ENCODE measurements at regions of chr1 and their contacts with region 1.

Region 1: DNA sequence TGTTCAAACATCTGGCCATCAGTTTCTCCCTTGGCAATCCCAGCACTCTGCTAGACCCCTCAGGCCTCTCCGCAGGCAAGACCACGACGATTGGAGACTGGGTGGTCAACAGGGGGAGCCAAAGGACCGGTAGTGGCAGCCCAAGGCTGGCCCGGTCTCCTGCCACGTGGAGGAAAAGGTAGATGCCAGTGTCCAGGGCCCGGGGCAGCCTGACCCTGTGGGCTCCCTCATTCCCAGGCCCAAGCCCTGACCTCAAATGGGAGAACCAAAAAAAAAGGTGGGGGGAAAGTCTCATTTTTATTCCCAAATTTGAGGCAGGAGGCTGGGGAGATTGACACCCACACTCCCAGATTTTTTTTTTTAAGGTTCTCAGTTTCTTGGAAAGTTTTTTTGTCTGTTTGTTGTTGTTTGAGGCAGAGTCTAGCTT is 24.8 kb downstream of the S100A6 start:
- DNase-seq: peak; percentile 87
- H3K4me3 Mint-ChIP-seq: no peak overlapping the region
- H3K27ac Mint-ChIP-seq: peak overlapping the region; percentile 45
- H3K4me1 Mint-ChIP-seq: peaks cover 10% of the 10 kb centered on the region
- H3K27me3 Mint-ChIP-seq: no peaks in the 10 kb centered on the region

Region 2: DNA sequence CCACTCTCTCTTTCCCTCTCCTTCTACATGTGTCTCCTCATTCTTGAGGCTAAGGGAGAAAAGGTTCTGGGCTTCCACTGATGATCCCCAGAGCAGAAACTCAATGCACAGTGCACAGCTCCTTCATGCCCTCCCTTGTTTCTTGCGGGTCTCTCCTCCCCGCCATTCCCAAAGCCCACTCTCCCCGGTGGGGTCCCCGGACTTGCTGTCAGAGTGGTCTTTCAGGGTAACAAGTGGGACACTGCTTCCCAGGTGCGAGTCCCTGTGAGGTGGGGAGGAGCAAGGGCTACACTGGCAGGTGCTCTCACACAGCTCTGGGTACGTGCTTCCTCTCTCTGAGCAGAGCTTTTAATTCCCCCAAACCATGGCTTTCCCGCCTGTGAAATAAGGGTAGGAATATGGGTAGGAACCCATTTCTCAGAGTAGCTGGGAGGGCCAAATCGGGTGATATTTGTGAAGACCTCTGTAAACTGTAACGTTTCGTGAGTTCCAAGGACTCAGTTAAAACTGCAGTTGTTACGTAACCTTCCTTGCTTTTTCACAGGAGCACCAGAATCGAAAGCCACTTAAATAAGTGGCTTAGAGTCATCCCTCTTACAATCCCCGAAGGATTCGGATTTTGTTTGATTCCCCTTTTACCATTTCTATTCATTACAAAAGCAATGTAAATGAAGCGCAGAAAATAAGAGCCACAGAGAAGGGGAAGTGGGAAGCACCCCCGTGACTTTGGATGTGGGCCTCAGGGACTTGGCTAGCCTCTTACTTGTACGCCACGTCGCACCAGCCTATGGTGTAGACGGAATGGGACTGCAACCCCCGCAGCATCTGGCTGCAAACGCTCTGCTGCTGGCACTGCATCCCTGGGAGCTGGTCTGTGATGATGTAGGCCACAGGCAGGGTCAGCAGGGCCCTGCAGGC is 204.4 kb before region 1 on chr1:
- CTCF ChIA-PET with region 1: no interaction called
- POLR2A ChIA-PET with region 1: no interaction called
- intact Hi-C with region 1: no loop called
- DNase-seq: no peak
- H3K4me3 Mint-ChIP-seq: no peak overlapping the region
- H3K27ac Mint-ChIP-seq: no peak overlapping the region
- H3K4me1 Mint-ChIP-seq: no peaks in the 10 kb centered on the region
- H3K27me3 Mint-ChIP-seq: peaks cover 1% of the 10 kb centered on the region

Region 3: GRCh38 chr1:153337980-153338853 is 172.8 kb before region 1 on chr1:
- CTCF ChIA-PET with region 1: no interaction called
- POLR2A ChIA-PET with region 1: no interaction called
- intact Hi-C with region 1: no loop called
- DNase-seq: no peak
- H3K4me3 Mint-ChIP-seq: no peak overlapping the region
- H3K27ac Mint-ChIP-seq: no peak overlapping the region
- H3K4me1 Mint-ChIP-seq: peaks cover 12% of the 10 kb centered on the region
- H3K27me3 Mint-ChIP-seq: peaks cover 2% of the 10 kb centered on the region

Region 4: DNA sequence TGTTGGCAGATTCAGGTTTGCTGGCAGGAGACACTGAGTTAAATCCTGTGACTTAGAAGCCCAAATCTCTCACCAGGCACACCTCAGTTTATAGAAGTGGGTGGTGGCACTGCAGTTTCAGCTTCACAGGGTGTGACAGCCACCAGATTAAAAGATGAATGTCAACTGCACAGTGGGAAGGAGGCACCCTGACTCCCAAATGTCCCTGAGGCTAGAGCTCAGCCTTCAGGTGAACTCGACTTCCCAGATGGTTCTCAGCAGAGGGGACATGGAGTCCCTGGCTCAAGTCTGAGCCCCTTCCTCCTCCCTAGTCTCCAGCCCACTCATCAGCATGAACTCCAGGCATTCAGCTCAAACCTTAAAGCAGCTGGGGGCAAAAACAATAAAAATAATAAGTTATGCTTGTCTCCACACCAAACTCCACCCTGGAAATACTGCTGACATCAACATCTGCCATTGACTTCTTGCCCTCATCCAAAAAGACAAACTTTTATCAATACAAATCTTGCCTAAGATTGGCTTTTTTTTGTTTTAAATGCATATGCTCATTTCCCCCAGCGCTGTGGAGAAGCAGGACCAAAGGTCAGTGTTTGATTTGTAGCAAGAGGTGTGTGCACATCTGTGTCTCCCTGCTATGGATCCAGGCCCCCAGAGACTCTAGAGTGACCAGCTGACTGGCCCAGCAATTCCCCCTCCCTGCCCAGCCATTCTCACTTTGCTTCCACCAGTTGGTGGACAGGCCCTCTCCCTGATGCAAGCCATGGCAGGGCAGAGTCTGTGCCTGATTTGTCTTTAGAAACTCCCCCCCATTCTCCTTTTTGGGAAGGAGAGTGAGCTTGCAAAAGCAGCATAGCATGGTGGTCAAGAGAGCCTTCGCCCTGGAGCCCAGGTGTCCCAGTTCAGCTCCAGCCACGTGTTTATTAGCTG is 32.0 kb before region 1 on chr1:
- CTCF ChIA-PET with region 1: no interaction called
- POLR2A ChIA-PET with region 1: no interaction called
- intact Hi-C with region 1: no loop called
- DNase-seq: no peak
- H3K4me3 Mint-ChIP-seq: no peak overlapping the region
- H3K27ac Mint-ChIP-seq: no peak overlapping the region
- H3K4me1 Mint-ChIP-seq: no peaks in the 10 kb centered on the region
- H3K27me3 Mint-ChIP-seq: peaks cover 21% of the 10 kb centered on the region

Region 5: DNA sequence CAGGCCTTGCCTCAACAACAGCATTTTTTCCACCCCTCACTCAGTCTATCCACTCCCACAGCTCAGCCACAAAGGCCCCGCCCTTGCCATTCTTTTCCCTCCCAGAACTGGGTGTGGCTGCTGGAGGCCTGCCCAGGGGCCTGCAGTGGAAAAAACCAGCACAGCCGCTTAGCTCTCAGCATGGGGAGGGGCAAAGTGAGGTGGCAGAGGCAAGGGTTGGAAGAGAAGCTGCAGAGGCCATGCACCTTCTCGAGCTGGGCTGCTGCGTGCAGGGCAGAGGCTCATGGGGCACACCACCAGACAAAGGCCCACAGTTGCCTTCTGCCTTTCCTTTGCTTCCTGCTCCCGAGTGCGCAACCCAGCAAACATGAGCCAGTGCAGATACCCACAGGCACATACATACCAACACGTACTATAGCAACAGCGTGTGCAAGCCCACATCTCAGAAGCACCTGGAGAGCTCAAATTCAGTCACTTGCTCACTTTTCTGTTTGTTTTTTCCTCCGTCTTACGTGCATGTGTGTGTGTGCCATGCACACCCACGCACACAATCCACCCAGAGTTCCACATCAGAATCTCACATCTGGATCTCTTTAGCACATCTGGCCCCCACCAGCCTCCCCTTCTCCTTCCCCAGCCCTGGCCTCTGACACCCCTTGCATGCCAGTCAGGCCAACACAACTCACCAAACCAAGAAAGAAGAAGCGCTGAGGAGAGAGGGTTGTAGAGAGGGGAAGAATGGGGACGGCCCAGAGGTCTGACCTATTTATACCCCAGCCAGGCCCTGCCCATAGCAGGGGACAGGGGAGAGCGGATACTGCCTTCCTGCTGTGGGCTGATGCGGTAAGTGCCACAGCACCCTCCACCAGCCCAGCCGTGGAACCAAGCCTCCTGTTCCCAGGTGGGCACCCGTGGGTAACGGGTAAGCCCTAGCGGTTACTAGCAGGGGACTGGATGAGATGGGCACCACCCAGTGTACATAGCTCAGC is 34.4 kb after region 1 on chr1 and contains the start of gene S100A4:
- CTCF ChIA-PET with region 1: interaction called, 28 read pairs
- POLR2A ChIA-PET with region 1: no interaction called
- intact Hi-C with region 1: no loop called
- DNase-seq: peak; percentile 98
- H3K4me3 Mint-ChIP-seq: peak within 1 kb of the TSS; percentile 92
- H3K27ac Mint-ChIP-seq: peak within 1 kb of the TSS; percentile 99
- H3K4me1 Mint-ChIP-seq: peaks cover 74% of the 10 kb centered on the region
- H3K27me3 Mint-ChIP-seq: no peaks in the 10 kb centered on the region
- total RNA-seq, gene S100A4: 352 to 382 TPM

Region 6: DNA sequence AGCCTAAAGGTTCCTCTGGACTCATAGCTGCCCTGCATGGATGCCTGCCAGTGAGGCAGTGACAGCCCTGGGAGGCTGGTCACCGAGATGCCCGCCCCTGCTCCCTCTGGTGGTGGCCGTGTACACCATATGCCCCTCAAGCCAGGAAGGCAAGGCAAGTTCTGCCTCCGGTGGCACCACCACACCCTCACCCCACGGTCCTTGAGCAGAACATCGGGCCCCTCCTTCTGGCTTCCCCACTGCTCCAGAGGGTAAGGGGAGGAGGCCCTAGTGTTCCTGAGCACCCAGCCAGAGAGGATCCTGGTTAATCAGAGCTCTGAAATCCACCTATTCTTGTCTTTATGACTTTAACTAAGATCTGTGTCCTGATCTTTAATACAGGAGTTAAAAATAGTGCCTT is 106.7 kb after region 1 on chr1:
- CTCF ChIA-PET with region 1: interaction called, 31 read pairs
- POLR2A ChIA-PET with region 1: no interaction called
- intact Hi-C with region 1: loop called (anchors 1 kb)
- DNase-seq: peak; percentile 80
- H3K4me3 Mint-ChIP-seq: no peak overlapping the region
- H3K27ac Mint-ChIP-seq: no peak overlapping the region
- H3K4me1 Mint-ChIP-seq: no peaks in the 10 kb centered on the region
- H3K27me3 Mint-ChIP-seq: no peaks in the 10 kb centered on the region

Region 7: GRCh38 chr1:153633716-153634665 is 123.0 kb after region 1 on chr1 and contains the start of gene CHTOP:
- CTCF ChIA-PET with region 1: interaction called, 29 read pairs
- POLR2A ChIA-PET with region 1: no interaction called
- intact Hi-C with region 1: no loop called
- DNase-seq: peak; percentile 98
- H3K4me3 Mint-ChIP-seq: peak within 1 kb of the TSS; percentile 92
- H3K27ac Mint-ChIP-seq: peak within 1 kb of the TSS; percentile 100
- H3K4me1 Mint-ChIP-seq: peaks cover 45% of the 10 kb centered on the region
- H3K27me3 Mint-ChIP-seq: no peaks in the 10 kb centered on the region
- total RNA-seq, gene CHTOP: 92.5 to 94.7 TPM

Region 8: GRCh38 chr1:153670859-153671627 is 160.0 kb after region 1 on chr1 and contains the start of gene ILF2:
- CTCF ChIA-PET with region 1: interaction called, 4 read pairs
- POLR2A ChIA-PET with region 1: no interaction called
- intact Hi-C with region 1: loop called (anchors 2 kb)
- DNase-seq: peak; percentile 99
- H3K4me3 Mint-ChIP-seq: no peak within 1 kb of the TSS
- H3K27ac Mint-ChIP-seq: no peak within 1 kb of the TSS
- H3K4me1 Mint-ChIP-seq: peaks cover 31% of the 10 kb centered on the region
- H3K27me3 Mint-ChIP-seq: no peaks in the 10 kb centered on the region
- total RNA-seq, gene ILF2: 315 to 323 TPM